Left cardiac atrium (tissue), 4 donors: ENCODE measurements at regions of chr15 and their contacts with region 1.

Region 1: DNA sequence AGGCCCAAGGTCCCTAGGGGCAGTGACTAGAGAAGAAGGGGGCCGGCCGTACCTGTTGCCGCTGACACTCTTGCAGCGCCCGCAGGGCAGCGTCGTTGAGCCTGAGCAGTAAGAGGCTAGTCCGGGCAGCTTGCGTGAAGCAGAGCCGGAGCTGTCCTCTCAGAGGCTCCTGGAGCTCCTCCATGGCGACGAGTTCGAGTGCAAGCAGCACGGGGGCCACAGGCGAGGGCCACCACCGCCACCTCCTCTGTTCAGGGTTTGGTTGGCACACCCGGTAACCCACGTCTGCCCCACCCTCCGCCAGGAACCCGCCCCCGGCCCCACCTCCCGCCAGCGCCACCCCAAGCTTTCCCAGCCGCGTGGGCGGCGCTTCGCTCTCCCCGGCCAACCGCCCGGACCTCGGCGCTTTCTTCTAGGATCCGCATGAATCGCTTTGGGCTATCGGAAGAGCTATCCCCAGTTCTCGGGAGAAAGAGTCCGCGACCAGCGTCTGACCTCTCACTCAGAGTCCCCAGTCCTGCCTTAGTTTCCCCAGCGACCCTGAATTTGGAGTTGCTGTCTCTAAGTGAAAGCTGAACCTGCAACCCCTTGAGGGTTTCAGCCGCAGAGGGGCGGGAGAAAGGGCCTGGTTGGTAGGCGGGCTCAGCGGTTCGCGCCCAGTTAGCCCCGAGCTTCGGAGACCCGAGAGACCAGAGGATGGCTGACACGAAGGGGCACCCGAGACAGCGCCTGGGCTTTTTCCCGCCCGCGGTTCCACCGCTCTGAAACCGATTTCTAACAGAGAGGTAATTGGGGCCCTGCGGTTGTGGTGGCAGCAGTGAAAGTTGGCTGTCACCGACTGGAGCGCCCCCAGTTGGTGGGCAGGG is at the start of gene ELL3:
- DNase-seq: peak; percentile 83
- ATAC-seq: peak; percentile 87 to 91
- total RNA-seq, gene ELL3: 0.47 to 1.6 TPM

Region 2: DNA sequence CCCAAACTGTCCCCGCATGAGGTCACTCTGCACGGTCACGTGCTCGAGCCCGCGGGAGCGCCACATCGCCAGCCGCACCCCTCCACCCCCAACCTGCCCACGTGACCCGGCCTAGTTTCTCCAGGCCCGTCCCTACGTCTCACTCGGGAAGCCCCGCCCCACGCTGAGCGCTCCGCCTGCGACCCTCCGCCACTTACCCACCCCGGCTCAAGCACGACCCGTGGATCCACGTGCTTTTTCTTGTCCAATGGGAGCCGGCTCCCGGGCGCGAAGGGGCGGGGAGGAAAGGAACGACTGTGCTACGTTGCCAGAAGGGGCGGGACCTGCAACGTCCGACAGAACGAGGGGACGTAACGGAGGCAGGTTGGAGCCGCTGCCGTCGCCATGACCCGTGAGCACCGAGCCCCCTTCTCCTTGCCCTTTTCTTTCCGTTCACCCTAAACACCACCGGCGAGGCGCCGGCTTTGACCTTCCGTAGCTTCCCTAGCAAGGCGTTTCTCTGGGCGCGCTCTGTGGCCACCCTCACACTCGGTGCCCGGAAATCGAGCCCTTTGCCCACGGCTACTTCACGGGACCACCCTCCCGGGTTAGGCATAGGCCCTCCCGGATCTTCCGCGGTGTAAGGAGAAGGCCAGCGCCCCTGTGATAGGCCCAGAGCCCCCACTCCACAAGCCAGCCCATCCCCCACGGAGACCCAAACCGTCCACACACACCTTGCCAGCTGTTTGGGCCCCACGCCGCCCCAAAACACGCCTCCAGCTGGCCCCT is 15.2 kb after region 1 on chr15 and contains the start of gene SERF2:
- intact Hi-C with region 1: loop called in 1 of 2 experiments (anchors 1 kb)
- DNase-seq: peak; percentile 100
- ATAC-seq: peak; percentile 97 to 98
- total RNA-seq, gene SERF2: 868 to 923 TPM

Region 3: GRCh38 chr15:43845421-43845820 is 68.5 kb after region 1 on chr15:
- intact Hi-C with region 1: no loop called
- DNase-seq: no peak
- ATAC-seq: no peak

Region 4: DNA sequence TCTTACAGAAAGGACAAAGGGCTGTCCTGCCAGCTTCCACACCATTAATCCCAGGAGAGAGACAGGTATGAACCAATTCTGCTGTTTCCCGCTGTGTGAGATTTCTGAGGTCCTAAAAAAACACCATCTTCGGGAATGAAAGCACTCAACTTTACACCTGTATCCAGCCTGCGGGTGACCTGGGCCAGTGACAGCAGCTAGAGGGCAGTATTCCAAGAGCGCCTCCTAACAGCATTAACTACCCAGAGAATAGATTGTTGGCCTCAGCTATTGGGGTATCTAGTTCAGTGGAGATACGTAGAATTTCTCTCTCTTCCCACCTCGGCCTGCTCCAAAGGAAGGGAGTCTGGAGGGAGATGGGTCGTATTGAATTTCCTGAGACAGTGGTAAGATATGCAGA is 105.0 kb after region 1 on chr15:
- intact Hi-C with region 1: no loop called
- DNase-seq: no peak
- ATAC-seq: no peak

Region 5: DNA sequence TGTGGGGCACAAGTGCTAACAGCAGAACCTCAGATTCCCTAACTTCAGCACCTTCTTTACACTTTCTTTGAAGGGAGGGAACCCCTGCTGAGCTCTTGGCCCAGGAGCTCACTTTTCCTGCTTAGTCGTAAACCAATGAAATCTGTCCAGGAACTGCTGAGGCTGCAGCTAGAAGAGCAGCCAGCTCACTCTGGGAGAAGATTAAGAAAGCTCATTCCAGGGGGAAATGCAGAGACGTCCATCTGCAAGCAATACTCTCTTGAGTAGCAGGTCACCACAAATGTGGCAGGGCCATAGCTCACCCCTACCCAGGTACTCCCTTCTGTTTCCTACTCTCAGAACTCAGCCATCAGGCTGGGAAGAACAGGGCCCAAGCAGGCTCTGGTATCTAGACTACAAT is 153.1 kb after region 1 on chr15:
- intact Hi-C with region 1: no loop called
- DNase-seq: no peak
- ATAC-seq: peak in 1 of 2 donors; percentile 63